Mammary epithelial cell (primary cell): ENCODE measurements at regions of chr1 and their contacts with region 1.

Region 1: DNA sequence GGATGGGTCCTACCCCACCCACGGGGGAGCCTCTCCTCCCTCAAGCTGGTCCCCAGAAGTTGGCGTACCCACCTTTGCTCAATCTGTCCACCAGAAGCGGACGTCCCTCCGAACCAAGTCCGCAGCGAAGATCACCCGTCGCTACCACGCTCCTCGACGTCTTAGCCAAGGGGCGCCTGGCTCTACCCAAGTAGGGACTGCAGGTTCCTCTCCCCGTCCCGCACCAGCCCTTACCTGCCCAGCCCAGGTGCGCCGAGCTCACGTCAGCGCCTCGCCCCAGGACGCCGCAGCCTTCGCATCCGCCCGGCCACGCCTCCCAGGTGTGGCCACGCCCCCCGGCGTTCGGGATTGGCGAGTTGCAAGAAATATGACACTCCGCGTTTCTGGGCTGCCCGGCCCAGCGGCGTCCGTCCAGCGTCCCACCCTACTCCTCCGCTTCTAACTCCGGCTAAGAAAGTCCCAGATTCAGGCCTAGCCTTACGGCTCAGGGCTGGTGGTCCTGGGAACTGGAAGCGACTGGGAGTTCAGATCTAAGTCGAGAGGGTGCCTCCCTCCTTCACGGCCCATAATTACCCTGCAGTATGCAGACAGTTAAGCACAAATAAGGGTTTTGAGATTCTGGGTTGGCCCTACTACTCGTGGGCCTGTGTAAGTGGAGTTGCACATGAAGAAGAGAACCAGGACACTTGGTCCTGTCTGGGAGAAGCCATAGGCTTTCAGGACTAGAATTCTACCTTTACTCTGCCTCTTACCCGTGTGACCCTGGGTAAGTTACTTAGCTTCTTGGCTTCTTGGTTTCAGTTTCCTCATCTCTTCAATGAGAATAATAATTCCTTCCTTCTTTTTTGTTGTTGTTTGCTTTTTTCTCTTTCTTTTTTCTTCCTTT is at the start of gene IRF6:
- DNase-seq: peak; percentile 99
- H3K4me3 ChIP-seq: peak within 1 kb of the TSS; percentile 68 to 96 (median 77)
- H3K27ac ChIP-seq: peak within 1 kb of the TSS; percentile 99
- H3K4me1 ChIP-seq: peaks cover 63% of the 10 kb centered on the region
- H3K27me3 ChIP-seq: no peaks in the 10 kb centered on the region
- CTCF ChIP-seq: no peak
- total RNA-seq, gene IRF6: 261 to 422 TPM

Region 2: GRCh38 chr1:209389258-209389657 is 416.9 kb before region 1 on chr1:
- CTCF ChIA-PET with region 1: no interaction called
- dilution Hi-C with region 1: no loop called
- in situ Hi-C with region 1: no loop called
- intact Hi-C with region 1: loop called (anchors 10 kb)
- DNase-seq: peak; percentile 98
- H3K4me3 ChIP-seq: no peak overlapping the region
- H3K27ac ChIP-seq: peak overlapping the region; percentile 98
- H3K4me1 ChIP-seq: peaks cover 64% of the 10 kb centered on the region
- H3K27me3 ChIP-seq: no peaks in the 10 kb centered on the region
- CTCF ChIP-seq: no peak